ENCODE measurements at regions of chr1 and their contacts with region 1.

Region 1: DNA sequence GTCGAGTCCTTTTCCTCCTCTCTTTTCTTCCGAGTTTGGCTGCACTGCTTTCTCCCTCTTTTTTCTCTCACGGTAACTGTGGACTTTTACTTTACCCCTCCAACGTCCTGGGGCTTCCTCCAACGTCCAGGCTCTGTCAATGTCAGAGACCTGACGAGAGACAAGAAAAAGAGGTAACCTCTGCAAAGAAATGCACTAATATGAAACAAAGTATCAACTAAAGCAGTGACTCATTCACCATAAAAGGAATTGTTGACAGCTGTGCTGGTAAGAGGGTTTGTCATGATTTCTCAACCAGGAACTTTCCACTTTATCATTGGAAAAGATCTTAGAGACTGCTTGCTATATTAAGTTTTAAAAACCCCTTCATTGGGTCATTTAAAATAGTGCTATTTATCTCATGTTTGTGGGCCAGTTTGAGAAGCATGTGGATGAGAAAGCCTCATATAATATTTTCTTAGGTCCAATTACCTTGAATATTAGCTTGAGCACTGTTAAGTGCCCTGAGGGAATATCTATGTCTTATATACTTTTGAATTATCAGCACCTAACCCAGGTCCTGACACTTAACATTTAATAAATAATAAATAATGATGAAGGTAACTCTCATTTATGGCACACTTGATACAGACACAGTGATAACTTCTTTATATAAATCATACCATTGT is at the start of gene GBP2:
- DNase-seq: peak; percentile 50
- ATAC-seq: peak; percentile 77
- H3K4me3 Mint-ChIP-seq: peak within 1 kb of the TSS; percentile 87
- H3K27ac Mint-ChIP-seq: peak within 1 kb of the TSS; percentile 99
- H3K4me1 Mint-ChIP-seq: peaks cover 52% of the 10 kb centered on the region
- H3K27me3 Mint-ChIP-seq: no peaks in the 10 kb centered on the region
- total RNA-seq, gene GBP2: 253 to 294 TPM

Region 2: GRCh38 chr1:88990426-88990825 is 135.6 kb before region 1 on chr1:
- CTCF ChIA-PET with region 1: interaction called, 6 read pairs
- POLR2A ChIA-PET with region 1: no interaction called
- intact Hi-C with region 1: loop called in 1 of 2 experiments (anchors 1 kb)
- DNase-seq: no peak
- ATAC-seq: no peak
- H3K4me3 Mint-ChIP-seq: peak overlapping the region; percentile 41
- H3K27ac Mint-ChIP-seq: peak overlapping the region; percentile 48
- H3K4me1 Mint-ChIP-seq: peaks cover 50% of the 10 kb centered on the region
- H3K27me3 Mint-ChIP-seq: no peaks in the 10 kb centered on the region

Region 3: GRCh38 chr1:89047734-89048133 is 78.3 kb before region 1 on chr1:
- CTCF ChIA-PET with region 1: no interaction called
- POLR2A ChIA-PET with region 1: no interaction called
- intact Hi-C with region 1: no loop called
- DNase-seq: no peak
- ATAC-seq: no peak
- H3K4me3 Mint-ChIP-seq: no peak overlapping the region
- H3K27ac Mint-ChIP-seq: no peak overlapping the region
- H3K4me1 Mint-ChIP-seq: peaks cover 7% of the 10 kb centered on the region
- H3K27me3 Mint-ChIP-seq: no peaks in the 10 kb centered on the region

Region 4: GRCh38 chr1:89104147-89104546 is 21.9 kb before region 1 on chr1:
- CTCF ChIA-PET with region 1: interaction called, 5 read pairs
- POLR2A ChIA-PET with region 1: no interaction called
- intact Hi-C with region 1: loop called (anchors 1 to 2 kb)
- DNase-seq: no peak
- ATAC-seq: peak; percentile 80
- H3K4me3 Mint-ChIP-seq: no peak overlapping the region
- H3K27ac Mint-ChIP-seq: peak overlapping the region; percentile 74
- H3K4me1 Mint-ChIP-seq: peaks cover 46% of the 10 kb centered on the region
- H3K27me3 Mint-ChIP-seq: no peaks in the 10 kb centered on the region

Region 5: DNA sequence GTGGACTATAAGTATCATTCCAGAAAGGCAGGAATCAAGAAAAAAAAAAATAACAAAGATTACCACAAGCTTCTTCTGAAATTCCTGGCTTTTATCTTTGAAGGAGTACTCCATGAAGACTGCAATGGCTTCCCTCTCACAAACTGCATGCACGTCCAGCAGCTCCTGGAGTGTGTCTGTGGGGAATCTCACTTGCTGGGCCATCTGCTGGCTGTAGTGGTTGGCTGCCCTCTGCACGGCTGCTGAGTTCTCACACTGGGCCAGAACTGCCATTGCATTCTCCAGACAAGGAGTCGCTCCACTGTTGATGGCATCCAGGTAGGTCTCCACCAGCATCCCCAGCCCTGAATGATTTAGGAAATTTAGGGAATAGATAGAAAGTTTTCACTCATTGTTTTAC is 23.2 kb after region 1 on chr1:
- CTCF ChIA-PET with region 1: no interaction called
- POLR2A ChIA-PET with region 1: no interaction called
- intact Hi-C with region 1: no loop called
- DNase-seq: no peak
- ATAC-seq: no peak
- H3K4me3 Mint-ChIP-seq: no peak overlapping the region
- H3K27ac Mint-ChIP-seq: no peak overlapping the region
- H3K4me1 Mint-ChIP-seq: peaks cover 16% of the 10 kb centered on the region
- H3K27me3 Mint-ChIP-seq: peaks cover 12% of the 10 kb centered on the region

Region 6: DNA sequence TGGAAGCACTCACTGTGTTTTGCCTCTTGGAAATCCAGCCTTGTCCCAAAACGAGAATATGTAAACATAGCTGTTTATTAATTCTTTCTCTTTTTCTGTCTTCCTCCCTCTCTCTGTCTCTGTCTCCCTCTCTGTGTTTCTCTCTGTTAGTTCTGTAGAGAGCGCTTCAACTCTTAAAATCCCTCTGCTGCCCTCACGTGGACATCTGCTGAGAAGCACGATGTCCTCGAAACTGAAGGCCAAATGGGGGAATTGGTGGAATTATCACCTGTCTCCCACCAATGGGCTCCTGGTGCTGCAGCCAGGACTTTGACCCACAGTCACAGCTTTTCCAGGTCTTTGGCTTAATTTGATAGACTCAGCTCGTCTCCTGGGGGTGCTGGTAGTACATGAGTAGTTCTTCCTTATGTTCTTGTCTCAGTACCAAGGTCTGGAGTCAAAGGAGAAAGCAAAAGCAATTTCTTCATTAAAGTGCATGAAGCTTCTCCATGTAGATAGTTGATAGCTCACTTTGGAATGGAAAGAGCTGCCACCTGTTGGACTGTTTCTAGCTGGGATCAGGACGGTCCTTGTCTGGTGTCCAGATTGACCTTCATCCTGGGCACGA is 232.3 kb after region 1 on chr1:
- CTCF ChIA-PET with region 1: interaction called, 8 read pairs
- POLR2A ChIA-PET with region 1: interaction called, 3 read pairs
- intact Hi-C with region 1: loop called (anchors 1 kb)
- DNase-seq: peak; percentile 90
- ATAC-seq: peak; percentile 73
- H3K4me3 Mint-ChIP-seq: peak overlapping the region; percentile 55
- H3K27ac Mint-ChIP-seq: peak overlapping the region; percentile 84
- H3K4me1 Mint-ChIP-seq: peaks cover 46% of the 10 kb centered on the region
- H3K27me3 Mint-ChIP-seq: no peaks in the 10 kb centered on the region

Region 7: DNA sequence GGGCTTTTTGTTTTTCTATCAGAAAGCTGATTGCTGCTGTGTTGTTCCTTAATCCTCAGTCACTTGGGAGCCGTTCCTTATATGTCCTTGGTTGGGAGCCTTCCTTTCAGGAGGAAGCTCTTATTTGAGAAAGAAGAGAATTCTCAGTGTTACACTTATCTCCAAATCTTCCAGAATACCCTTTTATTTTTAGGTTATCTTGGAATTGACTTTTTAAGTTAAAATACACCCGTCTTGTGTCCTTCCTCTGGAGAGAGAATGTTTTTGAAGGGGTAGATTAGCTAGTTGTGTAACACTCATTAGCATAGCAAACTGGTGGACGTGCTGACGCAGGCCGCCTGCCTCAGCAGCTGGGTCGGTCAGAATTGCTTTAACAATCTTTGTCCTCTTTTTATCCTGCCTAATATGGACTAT is 440.7 kb after region 1 on chr1:
- CTCF ChIA-PET with region 1: no interaction called
- POLR2A ChIA-PET with region 1: no interaction called
- intact Hi-C with region 1: no loop called
- DNase-seq: no peak
- ATAC-seq: no peak
- H3K4me3 Mint-ChIP-seq: no peak overlapping the region
- H3K27ac Mint-ChIP-seq: no peak overlapping the region
- H3K4me1 Mint-ChIP-seq: peaks cover 55% of the 10 kb centered on the region
- H3K27me3 Mint-ChIP-seq: no peaks in the 10 kb centered on the region